CD4-positive, alpha-beta T cell (primary cell): ENCODE measurements at regions of chr19 and their contacts with region 1.

Region 1: GRCh38 chr19:13764101-13764807 is at the start of gene MRI1:
- DNase-seq: peak; percentile 26 to 80 (median 58)
- ATAC-seq: peak; percentile 74
- H3K4me3 ChIP-seq: peak within 1 kb of the TSS; percentile 76
- H3K4me3 Mint-ChIP-seq: peak within 1 kb of the TSS; percentile 94
- H3K27ac ChIP-seq: peak within 1 kb of the TSS; percentile 22 to 70
- H3K27ac Mint-ChIP-seq: peak within 1 kb of the TSS; percentile 80
- H3K4me1 ChIP-seq: peaks cover 20% of the 10 kb centered on the region
- H3K4me1 Mint-ChIP-seq: peaks cover 21% of the 10 kb centered on the region
- H3K27me3 ChIP-seq: no peaks in the 10 kb centered on the region
- H3K27me3 Mint-ChIP-seq: no peaks in the 10 kb centered on the region
- CTCF ChIP-seq: no peak
- total RNA-seq, gene MRI1: 20.4 to 21.1 TPM

Region 2: DNA sequence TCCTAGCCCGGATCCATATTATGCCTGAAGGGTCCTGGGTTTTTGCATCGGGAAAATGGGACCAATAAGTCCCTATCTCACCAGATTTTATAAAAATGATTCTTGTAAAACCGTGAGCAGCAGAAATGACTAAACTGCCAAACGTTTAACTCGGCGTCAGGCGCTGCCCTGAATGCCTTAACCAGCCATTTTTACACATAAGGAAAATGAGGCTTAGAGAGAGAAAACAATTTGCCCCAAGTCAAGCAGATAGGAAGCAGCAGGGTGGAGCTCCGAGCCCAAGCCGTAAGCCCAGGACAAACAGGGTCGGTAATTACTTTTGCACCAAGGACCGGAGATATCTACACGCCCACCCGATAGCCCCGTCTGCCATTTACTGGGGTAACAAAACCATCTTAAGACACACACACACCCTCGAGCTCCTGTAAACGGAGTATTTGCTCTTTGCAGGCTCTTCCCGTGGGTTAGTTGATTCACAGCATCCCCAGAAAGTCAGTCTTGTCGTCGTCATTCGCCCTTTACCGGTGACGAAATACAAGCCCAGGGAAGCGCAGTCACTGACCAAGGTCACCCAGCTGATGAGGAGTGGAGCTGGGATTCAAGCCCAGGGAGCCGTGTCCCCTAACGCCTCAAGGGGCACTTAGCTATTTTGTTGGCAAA is 16.0 kb before region 1 on chr19:
- CTCF ChIA-PET with region 1: no interaction called
- POLR2A ChIA-PET with region 1: interaction called, 18 read pairs
- intact Hi-C with region 1: loop called in 1 of 2 experiments (anchors 1 kb)
- DNase-seq: peak in 7 of 14 experiments; percentile 10 to 58 (median 24)
- ATAC-seq: peak; percentile 15
- H3K4me3 ChIP-seq: peak overlapping the region; percentile 98
- H3K4me3 Mint-ChIP-seq: peak overlapping the region; percentile 91
- H3K27ac ChIP-seq: peak overlapping the region; percentile 79 to 95
- H3K27ac Mint-ChIP-seq: peak overlapping the region; percentile 87
- H3K4me1 ChIP-seq: peaks cover 34% of the 10 kb centered on the region
- H3K4me1 Mint-ChIP-seq: peaks cover 30% of the 10 kb centered on the region
- H3K27me3 ChIP-seq: no peaks in the 10 kb centered on the region
- H3K27me3 Mint-ChIP-seq: no peaks in the 10 kb centered on the region
- CTCF ChIP-seq: no peak